ENCODE measurements at regions of chr3 and their contacts with region 1.

Region 1: DNA sequence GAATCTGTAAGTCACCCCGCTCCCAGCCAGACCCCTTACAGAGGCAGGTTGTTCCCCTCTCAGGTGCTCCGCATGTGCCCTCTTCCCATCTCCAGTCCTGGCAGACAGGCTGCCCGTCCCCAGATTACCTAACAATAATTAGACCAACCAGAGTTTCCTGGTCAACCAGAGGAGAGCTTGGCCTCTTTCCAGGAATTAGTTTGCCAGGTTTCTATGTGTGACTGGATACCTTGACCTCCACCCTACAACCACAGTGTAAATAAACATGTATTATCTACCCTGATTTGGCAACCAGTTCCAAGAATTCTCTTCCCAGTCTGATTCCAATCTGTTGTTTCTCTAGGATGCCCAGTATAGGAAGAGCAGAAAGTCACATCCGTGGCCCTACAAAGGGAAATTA is 178.0 kb upstream of the UMPS start:
- H3K4me3 ChIP-seq: no peak overlapping the region
- H3K27ac ChIP-seq: no peak overlapping the region
- H3K4me1 ChIP-seq: 0 out of 2 replicates have a peak, but pooled peaks cover 2% of the 10 kb centered on the region
- CTCF ChIP-seq: no peak

Region 2: GRCh38 chr3:124351430-124352148 is 200.7 kb before region 1 on chr3:
- CTCF ChIA-PET with region 1: interaction called, 23 read pairs
- POLR2A ChIA-PET with region 1: no interaction called
- H3K4me3 ChIP-seq: no peak overlapping the region
- H3K27ac ChIP-seq: no peak overlapping the region
- H3K4me1 ChIP-seq: no peaks in the 10 kb centered on the region
- CTCF ChIP-seq: no peak

Region 3: DNA sequence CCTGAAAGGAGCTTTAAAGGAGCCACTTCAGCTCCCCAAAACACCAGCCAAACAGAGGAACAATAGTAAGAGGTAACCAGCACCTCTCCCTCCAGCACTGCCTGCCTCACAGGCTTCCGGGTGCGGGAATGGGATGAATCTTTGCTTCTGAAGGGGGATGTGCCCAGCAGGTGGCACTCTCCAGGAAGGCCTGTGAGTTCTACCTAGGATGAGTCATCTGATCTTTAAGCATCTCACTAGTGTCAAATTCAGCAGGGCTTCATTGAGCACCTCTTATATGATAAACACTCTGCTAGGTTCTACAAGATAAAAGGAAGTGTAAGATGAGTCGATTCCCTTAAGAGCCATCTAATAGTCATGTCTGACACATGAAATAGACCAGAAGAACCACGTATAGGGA is 59.4 kb before region 1 on chr3:
- CTCF ChIA-PET with region 1: interaction called, 27 read pairs
- POLR2A ChIA-PET with region 1: no interaction called
- H3K4me3 ChIP-seq: no peak overlapping the region
- H3K27ac ChIP-seq: no peak overlapping the region
- H3K4me1 ChIP-seq: no peaks in the 10 kb centered on the region
- CTCF ChIP-seq: peak; percentile 42; the same call in 1 of the 2 replicates

Region 4: GRCh38 chr3:124745756-124746155 is 193.5 kb after region 1 on chr3:
- CTCF ChIA-PET with region 1: no interaction called
- POLR2A ChIA-PET with region 1: no interaction called
- H3K4me3 ChIP-seq: no peak overlapping the region
- H3K27ac ChIP-seq: no peak overlapping the region
- H3K4me1 ChIP-seq: no peaks in the 10 kb centered on the region
- CTCF ChIP-seq: no peak

Region 5: DNA sequence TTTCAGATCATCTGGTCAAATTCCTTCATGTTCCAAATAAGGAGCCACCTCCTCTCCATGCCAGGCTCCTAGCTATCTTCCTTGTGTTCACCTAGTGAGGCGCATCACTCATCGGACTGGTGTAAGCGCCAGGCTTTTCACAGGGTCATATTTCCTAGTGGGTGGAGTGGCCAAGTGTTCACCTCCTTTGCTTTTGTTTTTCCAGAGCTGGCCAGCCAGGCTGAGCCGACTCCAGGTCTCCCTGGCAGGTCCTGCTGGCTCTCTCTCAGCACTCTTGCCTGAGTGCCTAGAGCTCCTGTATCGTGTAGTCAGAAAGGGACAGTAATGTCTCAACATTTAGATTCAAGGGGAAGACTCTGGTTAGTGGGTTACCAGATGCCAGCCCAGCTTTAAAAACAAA is 472.6 kb after region 1 on chr3:
- CTCF ChIA-PET with region 1: no interaction called
- POLR2A ChIA-PET with region 1: no interaction called
- H3K4me3 ChIP-seq: no peak overlapping the region
- H3K27ac ChIP-seq: no peak overlapping the region
- H3K4me1 ChIP-seq: no peaks in the 10 kb centered on the region
- CTCF ChIP-seq: no peak

Measured in HEK293 (cell line).